PC-9 (cell line): ENCODE measurements at regions of chr3 and their contacts with region 1.

Region 1: GRCh38 chr3:23999012-23999641 is 54.0 kb downstream of the NR1D2 start:
- DNase-seq: peak in 1 of 2 experiments; percentile 76
- H3K4me3 ChIP-seq: no peak overlapping the region
- H3K27ac ChIP-seq: no peak overlapping the region
- H3K4me1 ChIP-seq: no peaks in the 10 kb centered on the region
- H3K27me3 ChIP-seq: no peaks in the 10 kb centered on the region
- CTCF ChIP-seq: peak; percentile 98

Region 2: DNA sequence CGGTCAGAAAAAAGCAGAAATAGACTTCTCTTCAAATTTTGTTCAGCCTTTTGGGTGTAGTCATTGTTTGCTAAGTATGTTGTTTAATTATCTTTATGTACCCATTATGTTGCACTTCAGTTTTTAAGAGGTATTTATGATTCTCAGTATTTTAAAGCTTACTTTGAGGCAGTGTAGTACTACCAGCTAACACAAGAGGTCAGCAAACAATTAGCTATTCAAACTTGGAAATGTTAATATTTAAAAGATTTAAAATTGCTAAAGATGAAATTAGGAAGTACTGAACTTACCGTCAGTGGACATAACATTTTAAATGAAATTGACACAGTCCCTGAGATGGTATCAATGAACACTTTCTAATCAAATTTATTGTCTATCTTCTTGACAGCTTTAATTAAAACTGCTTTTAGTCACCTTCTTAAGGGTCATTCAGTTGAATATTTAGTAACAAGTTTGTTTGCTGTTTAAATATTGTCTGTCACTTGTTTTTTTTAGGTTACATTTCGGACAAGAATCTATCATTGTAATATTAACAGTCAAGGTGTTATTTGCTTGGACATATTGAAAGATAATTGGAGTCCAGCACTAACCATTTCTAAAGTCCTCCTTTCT is 110.4 kb before region 1 on chr3:
- CTCF ChIA-PET with region 1: no interaction called
- POLR2A ChIA-PET with region 1: no interaction called
- intact Hi-C with region 1: loop called (anchors 2 kb)
- DNase-seq: no peak
- H3K4me3 ChIP-seq: no peak overlapping the region
- H3K27ac ChIP-seq: peak overlapping the region; percentile 57
- H3K4me1 ChIP-seq: peaks cover 28% of the 10 kb centered on the region
- H3K27me3 ChIP-seq: no peaks in the 10 kb centered on the region
- CTCF ChIP-seq: peak; percentile 92

Region 3: DNA sequence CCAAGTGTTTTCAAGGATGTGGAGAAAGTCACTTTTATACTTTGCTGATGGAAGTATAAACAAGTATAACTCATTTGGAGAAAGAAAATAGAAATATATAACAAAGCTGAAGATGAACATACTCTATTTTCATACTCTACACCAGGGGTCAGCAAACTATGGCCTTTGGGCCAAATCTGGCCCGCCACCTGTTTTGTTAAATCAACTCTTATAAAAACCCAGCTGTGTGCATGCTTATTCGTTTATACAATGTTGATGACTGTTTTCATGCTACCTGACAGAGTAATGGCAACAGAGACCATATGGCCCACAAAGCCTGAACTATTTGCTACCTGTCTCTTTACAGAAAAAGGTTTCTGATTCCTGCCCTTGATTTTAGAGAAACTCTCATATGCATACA is 69.9 kb after region 1 on chr3:
- CTCF ChIA-PET with region 1: no interaction called
- POLR2A ChIA-PET with region 1: no interaction called
- intact Hi-C with region 1: loop called (anchors 5 kb)
- DNase-seq: peak in 1 of 2 experiments; percentile 17
- H3K4me3 ChIP-seq: no peak overlapping the region
- H3K27ac ChIP-seq: no peak overlapping the region
- H3K4me1 ChIP-seq: no peaks in the 10 kb centered on the region
- H3K27me3 ChIP-seq: no peaks in the 10 kb centered on the region
- CTCF ChIP-seq: peak; percentile 57

Region 4: GRCh38 chr3:24154013-24154695 is 155.0 kb after region 1 on chr3:
- CTCF ChIA-PET with region 1: interaction called, 5 read pairs
- POLR2A ChIA-PET with region 1: no interaction called
- intact Hi-C with region 1: loop called (anchors 5 kb)
- DNase-seq: no peak
- H3K4me3 ChIP-seq: no peak overlapping the region
- H3K27ac ChIP-seq: peak overlapping the region; percentile 27
- H3K4me1 ChIP-seq: peaks cover 64% of the 10 kb centered on the region
- H3K27me3 ChIP-seq: no peaks in the 10 kb centered on the region
- CTCF ChIP-seq: no peak

Region 5: GRCh38 chr3:24288496-24289236 is 289.5 kb after region 1 on chr3:
- CTCF ChIA-PET with region 1: no interaction called
- POLR2A ChIA-PET with region 1: no interaction called
- intact Hi-C with region 1: no loop called
- DNase-seq: no peak
- H3K4me3 ChIP-seq: no peak overlapping the region
- H3K27ac ChIP-seq: no peak overlapping the region
- H3K4me1 ChIP-seq: no peaks in the 10 kb centered on the region
- H3K27me3 ChIP-seq: no peaks in the 10 kb centered on the region
- CTCF ChIP-seq: no peak

Region 6: GRCh38 chr3:24494618-24495325 is 495.6 kb after region 1 on chr3 and contains the start of gene THRB:
- CTCF ChIA-PET with region 1: no interaction called
- POLR2A ChIA-PET with region 1: no interaction called
- intact Hi-C with region 1: loop called (anchors 1 kb)
- DNase-seq: peak; percentile 49 to 75
- H3K4me3 ChIP-seq: peak within 1 kb of the TSS; percentile 65
- H3K27ac ChIP-seq: peak within 1 kb of the TSS; percentile 89
- H3K4me1 ChIP-seq: peaks cover 46% of the 10 kb centered on the region
- H3K27me3 ChIP-seq: no peaks in the 10 kb centered on the region
- CTCF ChIP-seq: peak; percentile 36; the same call in 1 of the 2 replicates
- total RNA-seq, gene THRB: 9.7 and 11.2 TPM in 2 replicates

Region 7: DNA sequence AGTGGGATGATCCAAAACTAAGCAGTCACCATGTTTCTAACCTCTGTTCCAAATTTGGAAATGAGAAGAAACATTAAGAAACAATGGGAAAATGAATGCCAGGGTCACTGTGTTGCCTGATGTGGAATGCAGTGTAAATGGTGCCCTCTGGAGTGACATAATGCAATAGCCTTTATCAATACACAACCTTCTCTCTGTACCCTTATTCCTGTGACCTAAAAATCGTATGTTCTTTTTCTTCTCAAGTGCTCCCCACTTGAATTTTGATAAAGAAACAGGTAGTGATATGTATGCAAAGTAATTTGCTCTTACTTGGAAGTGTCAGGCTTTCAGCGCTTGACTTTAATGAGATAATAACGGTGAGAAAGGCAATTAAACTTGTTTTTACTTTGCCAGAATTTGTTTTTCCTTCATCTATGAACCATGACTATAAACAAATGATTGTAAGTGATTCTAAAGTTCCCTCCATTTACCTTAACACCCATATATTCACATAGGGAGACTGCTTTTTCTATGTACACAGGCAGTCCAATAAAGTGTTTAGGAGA is 641.3 kb after region 1 on chr3:
- CTCF ChIA-PET with region 1: no interaction called
- POLR2A ChIA-PET with region 1: no interaction called
- intact Hi-C with region 1: loop called (anchors 1 kb)
- DNase-seq: peak in 1 of 2 experiments; percentile 6
- H3K4me3 ChIP-seq: no peak overlapping the region
- H3K27ac ChIP-seq: no peak overlapping the region
- H3K4me1 ChIP-seq: no peaks in the 10 kb centered on the region
- H3K27me3 ChIP-seq: no peaks in the 10 kb centered on the region
- CTCF ChIP-seq: peak; percentile 65

Region 8: GRCh38 chr3:25594007-25594502 is 1594.9 kb after region 1 on chr3:
- CTCF ChIA-PET with region 1: no interaction called
- POLR2A ChIA-PET with region 1: no interaction called
- intact Hi-C with region 1: loop called (anchors 10 kb)
- DNase-seq: peak; percentile 21 to 71
- H3K4me3 ChIP-seq: no peak overlapping the region
- H3K27ac ChIP-seq: no peak overlapping the region
- H3K4me1 ChIP-seq: peaks cover 13% of the 10 kb centered on the region
- H3K27me3 ChIP-seq: no peaks in the 10 kb centered on the region
- CTCF ChIP-seq: peak; percentile 92